ENCODE measurements at regions of chr13 and their contacts with region 1.

Region 1: GRCh38 chr13:20197361-20197834 is 4.7 kb upstream of the GJB2 start:
- DNase-seq: no peak
- H3K4me3 Mint-ChIP-seq: no peak overlapping the region
- H3K27ac Mint-ChIP-seq: no peak overlapping the region
- H3K4me1 Mint-ChIP-seq: peaks cover 24% of the 10 kb centered on the region
- H3K27me3 Mint-ChIP-seq: peaks cover 52% of the 10 kb centered on the region

Region 2: GRCh38 chr13:20182231-20182846 is 15.1 kb before region 1 on chr13:
- intact Hi-C with region 1: loop called (anchors 2 kb)
- DNase-seq: no peak
- H3K4me3 Mint-ChIP-seq: no peak overlapping the region
- H3K27ac Mint-ChIP-seq: no peak overlapping the region
- H3K4me1 Mint-ChIP-seq: no peaks in the 10 kb centered on the region
- H3K27me3 Mint-ChIP-seq: peaks cover 25% of the 10 kb centered on the region

Region 3: DNA sequence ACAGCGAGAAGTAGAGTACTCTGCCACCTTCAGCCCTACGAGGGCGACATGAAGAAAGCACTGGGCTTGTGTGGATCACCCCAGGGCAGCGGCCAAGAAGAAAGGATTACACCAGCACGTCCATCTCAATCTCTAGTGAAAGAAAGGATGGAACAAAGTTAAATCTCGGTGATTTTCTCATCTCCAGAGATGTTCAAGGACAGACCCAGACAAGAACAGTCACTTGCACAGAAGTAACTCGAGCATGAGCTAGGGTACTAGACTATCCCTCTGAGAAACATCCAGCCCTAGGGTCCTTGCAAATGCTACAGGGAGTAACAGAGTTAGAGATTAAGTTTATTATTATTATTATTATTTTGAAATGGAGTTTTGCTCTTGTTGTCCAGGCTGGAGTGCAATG is 221.6 kb after region 1 on chr13:
- intact Hi-C with region 1: loop called (anchors 2 kb)
- DNase-seq: no peak
- H3K4me3 Mint-ChIP-seq: no peak overlapping the region
- H3K27ac Mint-ChIP-seq: peak overlapping the region; percentile 42
- H3K4me1 Mint-ChIP-seq: peaks cover 57% of the 10 kb centered on the region
- H3K27me3 Mint-ChIP-seq: peaks cover 2% of the 10 kb centered on the region

Region 4: DNA sequence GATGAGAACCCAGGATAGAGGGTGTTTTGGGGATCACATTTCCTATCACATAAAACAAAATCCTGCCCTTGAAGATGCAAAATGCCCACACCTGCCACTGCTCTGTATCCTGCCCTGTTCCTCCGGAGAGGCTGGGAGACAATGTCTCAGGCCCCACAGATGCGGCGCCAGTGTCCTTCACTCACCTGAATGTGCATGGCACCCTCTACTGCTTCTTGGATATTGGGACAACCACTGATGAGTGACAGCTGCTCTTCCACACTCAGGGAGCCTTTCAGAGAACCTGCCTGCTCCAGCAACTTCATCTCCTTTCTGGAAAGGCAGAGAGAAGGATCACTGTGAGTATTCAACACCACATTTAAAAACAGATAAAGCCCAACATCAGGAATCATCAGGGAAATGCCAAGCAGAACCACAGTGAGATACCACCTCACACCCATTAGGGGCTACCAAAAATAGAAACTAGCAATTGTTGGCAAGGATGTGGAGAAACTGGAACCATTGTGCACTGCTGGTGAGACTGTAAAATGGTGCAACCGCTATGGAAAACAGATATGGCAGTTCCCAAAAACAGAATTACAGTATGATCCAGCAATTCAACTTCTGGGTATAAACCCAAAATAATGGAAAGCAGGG is 291.9 kb after region 1 on chr13:
- intact Hi-C with region 1: loop called (anchors 1 kb)
- DNase-seq: peak; percentile 25
- H3K4me3 Mint-ChIP-seq: no peak overlapping the region
- H3K27ac Mint-ChIP-seq: no peak overlapping the region
- H3K4me1 Mint-ChIP-seq: peaks cover 8% of the 10 kb centered on the region
- H3K27me3 Mint-ChIP-seq: peaks cover 3% of the 10 kb centered on the region

Region 5: DNA sequence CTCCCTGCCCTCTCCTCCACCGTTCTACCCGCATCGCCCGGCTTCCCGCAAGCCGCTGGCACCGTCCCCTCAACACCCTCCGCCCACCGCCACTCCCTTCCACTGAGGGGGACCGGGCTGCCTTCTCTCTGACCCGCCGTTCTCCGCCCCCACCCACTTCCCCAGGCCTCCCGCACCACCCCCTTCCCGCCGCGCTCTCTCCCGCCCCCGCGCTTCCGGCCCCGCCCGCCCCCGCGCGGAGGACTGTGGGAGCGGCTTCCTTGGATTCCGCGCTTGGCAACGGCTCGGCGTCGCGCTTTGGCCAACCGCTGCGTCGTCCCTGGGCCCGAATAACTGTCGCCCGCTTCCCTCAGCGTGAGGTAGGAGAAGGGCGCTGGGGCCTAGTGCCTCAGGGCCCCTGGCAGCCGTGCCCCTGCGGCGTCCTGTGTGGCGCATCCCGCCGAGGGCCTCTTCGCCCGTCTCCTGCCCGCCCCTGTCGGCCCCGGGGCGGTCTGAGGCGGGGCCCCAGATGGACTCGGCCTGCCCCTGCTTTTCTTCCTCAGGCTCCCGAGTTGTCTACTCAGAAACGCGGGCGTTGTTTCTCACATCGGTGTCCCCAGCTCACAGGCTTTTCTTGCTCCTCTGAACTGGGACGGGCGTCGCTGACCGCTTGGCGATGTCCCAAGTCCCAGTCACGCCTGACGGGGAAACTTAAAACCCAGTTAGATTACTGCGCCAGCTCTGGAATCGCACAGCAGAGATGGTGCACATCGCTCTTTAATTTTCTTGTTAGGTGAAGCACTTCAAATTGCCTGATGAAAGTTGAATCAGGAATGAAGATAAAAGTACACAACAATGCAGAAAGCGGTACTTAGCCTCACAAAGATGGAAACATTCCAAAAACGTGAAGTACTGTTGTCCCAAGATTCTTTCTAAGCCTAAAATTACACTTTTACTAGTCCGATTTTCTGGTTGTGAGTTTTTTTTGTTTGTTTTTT is 369.8 kb after region 1 on chr13 and contains the start of gene IFT88:
- intact Hi-C with region 1: loop called (anchors 5 kb)
- DNase-seq: peak; percentile 85
- H3K4me3 Mint-ChIP-seq: peak within 1 kb of the TSS; percentile 88
- H3K27ac Mint-ChIP-seq: peak within 1 kb of the TSS; percentile 88
- H3K4me1 Mint-ChIP-seq: peaks cover 27% of the 10 kb centered on the region
- H3K27me3 Mint-ChIP-seq: no peaks in the 10 kb centered on the region
- total RNA-seq, gene IFT88: 1.5 TPM in 2 replicates

Region 6: GRCh38 chr13:20703780-20704445 is 506.5 kb after region 1 on chr13:
- intact Hi-C with region 1: loop called (anchors 2 kb)
- DNase-seq: peak; percentile 65
- H3K4me3 Mint-ChIP-seq: no peak overlapping the region
- H3K27ac Mint-ChIP-seq: no peak overlapping the region
- H3K4me1 Mint-ChIP-seq: peaks cover 5% of the 10 kb centered on the region
- H3K27me3 Mint-ChIP-seq: peaks cover 40% of the 10 kb centered on the region

Region 7: DNA sequence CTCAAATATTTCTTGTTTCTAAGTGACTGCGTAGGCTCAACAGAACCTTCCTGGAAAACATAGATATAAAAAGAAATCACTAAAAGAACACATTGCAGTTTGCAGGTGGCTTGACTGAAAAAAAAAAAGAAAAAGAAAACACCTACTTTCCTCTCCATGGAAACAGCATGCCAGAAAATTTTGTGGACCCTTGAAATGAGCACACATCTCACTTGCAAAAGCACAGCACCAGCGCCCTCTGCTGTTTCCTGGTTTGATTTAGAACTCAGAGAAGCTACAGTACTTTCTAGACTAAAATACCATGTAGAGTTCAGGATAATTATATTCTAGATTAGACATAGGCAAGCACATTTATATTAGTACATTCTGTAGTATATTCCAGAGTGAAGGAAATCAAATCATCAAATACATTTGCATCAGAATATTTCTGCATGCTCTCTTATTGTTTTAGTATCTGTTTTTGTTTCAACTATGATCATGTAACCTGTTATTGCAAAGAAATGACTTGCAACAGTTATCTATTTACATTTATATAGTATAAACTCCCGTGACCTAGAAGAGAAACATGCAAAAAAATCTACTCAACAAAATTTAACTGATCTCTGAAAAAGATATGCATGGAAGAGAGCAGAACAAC is 727.5 kb after region 1 on chr13:
- intact Hi-C with region 1: loop called (anchors 5 kb)
- DNase-seq: peak; percentile 48
- H3K4me3 Mint-ChIP-seq: no peak overlapping the region
- H3K27ac Mint-ChIP-seq: no peak overlapping the region
- H3K4me1 Mint-ChIP-seq: no peaks in the 10 kb centered on the region
- H3K27me3 Mint-ChIP-seq: peaks cover 2% of the 10 kb centered on the region